ENCODE measurements at regions of chr11 and their contacts with region 1.

Region 1: GRCh38 chr11:96215110-96215782 is 127.7 kb downstream of the MAML2 start:
- DNase-seq: peak in 7 of 9 donors; percentile 25 to 67 (median 62)
- ATAC-seq: peak; percentile 78
- H3K4me3 ChIP-seq: peak overlapping the region; percentile 47
- H3K4me3 Mint-ChIP-seq: peak overlapping the region; percentile 64 to 80 (median 75)
- H3K27ac ChIP-seq: peak overlapping the region; percentile 75
- H3K27ac Mint-ChIP-seq: peak overlapping the region; percentile 89 to 99 (median 96)
- H3K4me1 ChIP-seq: peaks cover 73 to 96% of the 10 kb centered on the region in 2 donors
- H3K4me1 Mint-ChIP-seq: peaks cover 54 to 100% (median 91%) of the 10 kb centered on the region in 7 donors
- H3K27me3 ChIP-seq: no peaks in the 10 kb centered on the region
- H3K27me3 Mint-ChIP-seq: no peaks in the 10 kb centered on the region

Region 2: GRCh38 chr11:96159968-96160367 is 55.3 kb before region 1 on chr11:
- CTCF ChIA-PET with region 1: no interaction called
- POLR2A ChIA-PET with region 1: no interaction called
- intact Hi-C with region 1: loop called in 1 of 2 experiments (anchors 2 kb)
- DNase-seq: no peak
- ATAC-seq: no peak
- H3K4me3 ChIP-seq: no peak overlapping the region
- H3K4me3 Mint-ChIP-seq: peak overlapping the region in 1 of 10 donors; percentile 5
- H3K27ac ChIP-seq: no peak overlapping the region
- H3K27ac Mint-ChIP-seq: peak overlapping the region in 8 of 9 donors; percentile 9 to 80 (median 30)
- H3K4me1 ChIP-seq: peaks cover 17 to 36% of the 10 kb centered on the region in 2 donors
- H3K4me1 Mint-ChIP-seq: peaks cover 29 to 93% (median 79%) of the 10 kb centered on the region in 7 donors
- H3K27me3 ChIP-seq: no peaks in the 10 kb centered on the region
- H3K27me3 Mint-ChIP-seq: no peaks in the 10 kb centered on the region

Region 3: DNA sequence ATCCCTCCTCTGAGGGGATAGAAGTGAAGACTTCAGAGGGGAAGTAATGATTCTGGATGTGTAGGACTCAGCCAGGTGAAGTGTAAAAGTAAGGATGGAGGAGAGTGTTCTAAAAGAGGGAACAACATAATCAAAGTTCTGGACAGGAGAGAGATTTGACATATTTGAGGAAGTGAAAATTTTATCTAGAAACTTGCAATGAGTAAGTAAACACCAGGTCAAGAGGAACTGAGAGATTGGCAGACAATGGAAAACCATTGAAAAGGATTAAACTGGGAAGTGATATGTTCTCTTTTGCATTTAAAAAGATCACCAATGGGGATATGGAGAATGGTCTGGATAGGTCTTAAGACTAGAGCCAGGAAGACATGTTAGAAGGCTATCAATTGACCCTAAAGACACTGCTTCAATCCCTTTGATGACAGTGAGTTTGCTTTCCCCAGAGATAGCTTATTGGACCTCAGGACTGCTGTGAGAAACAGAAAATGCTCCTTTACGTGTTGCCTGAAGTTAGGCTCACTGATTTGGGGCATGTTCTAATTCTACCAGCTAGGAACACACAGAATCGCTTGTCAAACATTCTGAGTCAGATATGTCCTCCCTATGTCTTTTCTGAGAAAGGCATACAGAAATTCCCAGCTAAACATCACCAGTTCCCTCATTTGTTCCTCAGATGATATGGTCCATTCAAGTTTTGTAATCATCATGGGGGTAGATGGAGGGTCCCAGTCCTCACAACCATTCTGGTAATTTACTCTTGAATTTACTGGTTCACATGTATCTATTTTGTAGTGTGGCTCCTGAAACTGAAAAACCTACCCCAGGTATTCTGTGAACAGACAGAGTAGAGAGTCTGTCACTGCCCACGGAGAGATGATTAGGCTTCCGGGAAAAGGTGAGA is 17.2 kb before region 1 on chr11:
- CTCF ChIA-PET with region 1: no interaction called
- POLR2A ChIA-PET with region 1: interaction called, 32 read pairs
- intact Hi-C with region 1: no loop called
- DNase-seq: no peak
- ATAC-seq: peak; percentile 57
- H3K4me3 ChIP-seq: no peak overlapping the region
- H3K4me3 Mint-ChIP-seq: peak overlapping the region in 5 of 10 donors; percentile 13 to 59 (median 41)
- H3K27ac ChIP-seq: no peak overlapping the region
- H3K27ac Mint-ChIP-seq: peak overlapping the region in 8 of 9 donors; percentile 21 to 82 (median 58)
- H3K4me1 ChIP-seq: peaks cover 25 to 49% of the 10 kb centered on the region in 2 donors
- H3K4me1 Mint-ChIP-seq: peaks cover 45 to 93% (median 87%) of the 10 kb centered on the region in 7 donors
- H3K27me3 ChIP-seq: no peaks in the 10 kb centered on the region
- H3K27me3 Mint-ChIP-seq: no peaks in the 10 kb centered on the region

Region 4: DNA sequence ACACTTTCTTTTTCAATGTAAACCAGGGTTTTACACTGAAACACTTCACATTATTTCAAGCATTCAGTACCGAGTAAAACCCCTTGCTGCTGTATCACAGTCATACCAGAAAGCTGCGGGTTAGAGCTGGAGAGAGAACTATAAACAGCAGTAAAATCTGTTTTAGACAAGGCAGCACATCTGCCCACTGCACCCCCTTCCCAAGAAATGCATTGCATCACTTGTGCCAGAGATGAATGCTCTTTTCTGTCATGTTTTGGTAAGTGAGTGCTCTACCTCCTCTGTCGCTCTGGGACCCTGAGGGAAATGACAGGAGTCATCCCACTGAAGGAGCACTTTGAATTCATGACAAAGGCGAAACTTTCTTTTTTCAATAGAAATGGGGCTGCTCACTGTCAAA is 20.5 kb after region 1 on chr11:
- CTCF ChIA-PET with region 1: no interaction called
- POLR2A ChIA-PET with region 1: interaction called, 16 read pairs
- intact Hi-C with region 1: loop called in 1 of 2 experiments (anchors 1 kb)
- DNase-seq: peak in 1 of 9 donors; percentile 64
- ATAC-seq: peak; percentile 57
- H3K4me3 ChIP-seq: no peak overlapping the region
- H3K4me3 Mint-ChIP-seq: peak overlapping the region in 8 of 10 donors; percentile 9 to 70 (median 39)
- H3K27ac ChIP-seq: peak overlapping the region; percentile 6
- H3K27ac Mint-ChIP-seq: peak overlapping the region in 6 of 9 donors; percentile 38 to 83 (median 64)
- H3K4me1 ChIP-seq: peaks cover 0 to 53% of the 10 kb centered on the region in 2 donors
- H3K4me1 Mint-ChIP-seq: peaks cover 20 to 40% (median 28%) of the 10 kb centered on the region in 7 donors
- H3K27me3 ChIP-seq: no peaks in the 10 kb centered on the region
- H3K27me3 Mint-ChIP-seq: no peaks in the 10 kb centered on the region

Region 5: GRCh38 chr11:96254087-96254486 is 38.8 kb after region 1 on chr11:
- CTCF ChIA-PET with region 1: no interaction called
- POLR2A ChIA-PET with region 1: interaction called, 51 read pairs
- intact Hi-C with region 1: loop called in 1 of 2 experiments (anchors 1 kb)
- DNase-seq: peak in 7 of 9 donors; percentile 32 to 64 (median 43)
- ATAC-seq: peak; percentile 32
- H3K4me3 ChIP-seq: peak overlapping the region; percentile 40
- H3K4me3 Mint-ChIP-seq: peak overlapping the region; percentile 74 to 87 (median 81)
- H3K27ac ChIP-seq: peak overlapping the region; percentile 77
- H3K27ac Mint-ChIP-seq: peak overlapping the region; percentile 87 to 100 (median 96)
- H3K4me1 ChIP-seq: peaks cover 58 to 78% of the 10 kb centered on the region in 2 donors
- H3K4me1 Mint-ChIP-seq: peaks cover 62 to 99% (median 94%) of the 10 kb centered on the region in 7 donors
- H3K27me3 ChIP-seq: no peaks in the 10 kb centered on the region
- H3K27me3 Mint-ChIP-seq: no peaks in the 10 kb centered on the region